Activated CD8-positive, alpha-beta T cell treated with anti-CD3 and anti-CD28 coated beads for 36 hours (primary cell): ENCODE measurements at regions of chr12 and their contacts with region 1.

Region 1: DNA sequence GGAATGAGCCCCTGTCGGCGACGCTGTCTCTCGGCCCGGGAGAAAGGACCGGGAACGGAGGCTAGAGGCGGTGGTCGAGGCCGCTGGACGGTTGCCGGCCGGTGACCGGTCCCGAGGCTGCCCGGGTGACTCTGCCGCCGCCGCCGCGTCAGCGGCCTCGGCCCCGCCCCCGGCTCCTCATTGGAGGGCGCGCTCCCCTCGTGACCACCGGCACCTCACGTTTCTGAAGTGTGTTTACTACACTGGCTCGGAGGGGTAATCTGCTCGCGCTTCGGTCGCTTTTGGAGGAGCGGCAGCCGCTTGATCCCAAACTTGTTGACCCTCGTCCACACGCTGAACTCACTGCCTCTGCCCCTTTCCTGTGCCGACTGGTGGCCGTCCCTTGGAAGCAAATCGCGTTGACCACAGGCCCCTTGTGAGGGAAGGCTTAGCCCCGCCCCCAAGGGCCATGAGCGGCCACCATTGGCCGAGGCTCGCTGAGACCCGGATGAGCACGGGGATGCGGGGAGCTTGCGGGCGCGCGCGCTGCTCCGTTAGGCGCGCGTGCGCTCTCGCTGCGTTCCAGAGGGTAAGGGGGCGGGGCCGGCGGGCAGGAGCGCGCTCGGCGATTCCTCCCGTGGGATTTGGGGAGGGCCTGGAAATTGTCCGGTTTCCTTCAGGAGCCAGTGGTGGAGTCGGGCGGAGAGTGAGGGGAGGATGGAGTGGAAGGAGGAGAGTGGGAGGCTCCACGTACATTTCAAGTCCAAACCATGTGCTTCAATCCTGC is at the start of gene CRY1:
- DNase-seq: peak; percentile 94
- ATAC-seq: peak; percentile 85
- H3K4me3 Mint-ChIP-seq: no peak within 1 kb of the TSS
- H3K27ac Mint-ChIP-seq: no peak within 1 kb of the TSS
- H3K4me1 Mint-ChIP-seq: peaks cover 11% of the 10 kb centered on the region
- H3K27me3 Mint-ChIP-seq: peaks cover 3% of the 10 kb centered on the region
- CTCF ChIP-seq: no peak
- total RNA-seq, gene CRY1: 26.6 to 27.8 TPM

Region 2: GRCh38 chr12:106955377-106956047 is 138.1 kb before region 1 on chr12 and contains the start of gene TMEM263:
- CTCF ChIA-PET with region 1: no interaction called
- POLR2A ChIA-PET with region 1: interaction called, 10 read pairs
- intact Hi-C with region 1: no loop called
- DNase-seq: peak; percentile 92
- ATAC-seq: peak; percentile 86
- H3K4me3 Mint-ChIP-seq: peak within 1 kb of the TSS; percentile 96
- H3K27ac Mint-ChIP-seq: peak within 1 kb of the TSS; percentile 95
- H3K4me1 Mint-ChIP-seq: peaks cover 19% of the 10 kb centered on the region
- H3K27me3 Mint-ChIP-seq: no peaks in the 10 kb centered on the region
- CTCF ChIP-seq: no peak
- total RNA-seq, gene TMEM263: 43.5 to 46.5 TPM

Region 3: GRCh38 chr12:106986625-106987430 is 106.8 kb before region 1 on chr12 and contains the start of gene MTERF2:
- CTCF ChIA-PET with region 1: no interaction called
- POLR2A ChIA-PET with region 1: no interaction called
- intact Hi-C with region 1: loop called (anchors 10 kb)
- DNase-seq: peak; percentile 86
- ATAC-seq: peak; percentile 98
- H3K4me3 Mint-ChIP-seq: peak within 1 kb of the TSS; percentile 90
- H3K27ac Mint-ChIP-seq: peak within 1 kb of the TSS; percentile 85
- H3K4me1 Mint-ChIP-seq: peaks cover 38% of the 10 kb centered on the region
- H3K27me3 Mint-ChIP-seq: no peaks in the 10 kb centered on the region
- CTCF ChIP-seq: no peak
- total RNA-seq, gene MTERF2: 4.8 to 5.9 TPM

Region 4: GRCh38 chr12:107079172-107080011 is 14.2 kb before region 1 on chr12:
- CTCF ChIA-PET with region 1: interaction called, 16 read pairs
- POLR2A ChIA-PET with region 1: interaction called, 3 read pairs
- intact Hi-C with region 1: no loop called
- DNase-seq: no peak
- ATAC-seq: peak; percentile 86
- H3K4me3 Mint-ChIP-seq: no peak overlapping the region
- H3K27ac Mint-ChIP-seq: no peak overlapping the region
- H3K4me1 Mint-ChIP-seq: peaks cover 15% of the 10 kb centered on the region
- H3K27me3 Mint-ChIP-seq: no peaks in the 10 kb centered on the region
- CTCF ChIP-seq: peak; percentile 62

Region 5: DNA sequence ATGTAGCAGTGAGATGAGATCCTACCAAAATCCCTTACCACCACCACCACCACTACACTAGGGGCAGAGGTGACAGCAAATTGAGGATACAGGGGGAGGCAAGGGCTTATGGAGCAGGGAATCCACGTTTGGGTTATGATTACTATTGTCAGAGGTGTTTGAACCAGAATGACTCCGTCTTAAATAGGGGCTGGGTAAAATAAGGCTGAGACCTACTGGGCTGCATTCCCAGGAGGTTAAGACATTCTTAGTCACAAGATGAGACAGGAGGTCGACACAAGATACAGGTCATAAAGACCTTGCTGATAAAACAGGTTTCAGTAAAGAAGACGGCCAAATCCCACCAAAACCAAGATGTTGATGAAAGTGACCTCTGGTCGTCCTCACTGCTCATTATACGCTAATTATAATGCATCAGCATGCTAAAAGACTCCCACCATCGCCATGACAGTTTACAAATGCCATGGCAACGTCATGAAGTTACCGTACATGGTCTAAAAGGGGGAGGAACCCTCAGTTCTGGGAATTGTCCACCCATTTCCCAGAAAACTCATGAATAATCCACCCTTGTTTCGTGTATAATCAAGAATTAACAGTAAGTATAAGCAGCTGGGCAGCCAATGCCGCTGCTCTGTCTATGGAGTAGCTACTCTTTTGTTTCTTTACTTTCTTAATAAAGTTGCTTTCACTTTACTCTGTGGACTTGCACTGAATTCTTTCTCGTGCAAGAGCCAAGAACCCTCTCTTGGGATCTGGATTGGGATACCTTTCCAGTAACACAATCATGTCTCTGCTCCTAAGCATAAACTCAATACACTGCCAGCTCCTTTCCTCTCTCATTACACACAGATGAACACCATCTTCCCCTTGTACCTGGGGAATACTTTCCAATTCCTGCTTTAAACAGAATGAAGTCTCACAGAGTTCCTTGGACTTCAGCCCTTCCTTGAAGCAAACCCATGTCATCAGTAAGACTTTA is 16.4 kb after region 1 on chr12:
- CTCF ChIA-PET with region 1: interaction called, 70 read pairs
- POLR2A ChIA-PET with region 1: no interaction called
- intact Hi-C with region 1: no loop called
- DNase-seq: no peak
- ATAC-seq: no peak
- H3K4me3 Mint-ChIP-seq: no peak overlapping the region
- H3K27ac Mint-ChIP-seq: no peak overlapping the region
- H3K4me1 Mint-ChIP-seq: no peaks in the 10 kb centered on the region
- H3K27me3 Mint-ChIP-seq: peaks cover 5% of the 10 kb centered on the region
- CTCF ChIP-seq: no peak

Region 6: DNA sequence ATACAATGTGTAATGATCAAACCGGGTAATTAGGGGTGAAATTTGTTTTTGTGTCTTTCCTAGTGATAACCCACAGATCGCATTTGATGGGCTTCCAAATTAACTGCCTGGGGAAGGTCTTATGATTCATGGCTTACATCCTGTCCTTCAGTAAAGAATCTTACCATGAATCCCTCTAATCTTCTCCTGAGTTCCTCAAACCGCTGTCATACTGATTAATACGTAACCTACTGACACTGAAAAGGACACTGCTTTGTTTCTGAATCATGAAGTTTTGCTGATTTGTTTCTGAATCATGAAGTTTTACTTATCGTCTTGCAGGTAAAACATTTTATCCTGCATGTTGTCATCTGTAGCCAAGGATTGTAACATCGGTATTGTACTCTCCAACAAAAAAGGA is 51.8 kb after region 1 on chr12:
- CTCF ChIA-PET with region 1: no interaction called
- POLR2A ChIA-PET with region 1: no interaction called
- intact Hi-C with region 1: no loop called
- DNase-seq: no peak
- ATAC-seq: no peak
- H3K4me3 Mint-ChIP-seq: no peak overlapping the region
- H3K27ac Mint-ChIP-seq: no peak overlapping the region
- H3K4me1 Mint-ChIP-seq: no peaks in the 10 kb centered on the region
- H3K27me3 Mint-ChIP-seq: no peaks in the 10 kb centered on the region
- CTCF ChIP-seq: no peak

Region 7: GRCh38 chr12:107159384-107159900 is 65.8 kb after region 1 on chr12:
- CTCF ChIA-PET with region 1: no interaction called
- POLR2A ChIA-PET with region 1: no interaction called
- intact Hi-C with region 1: no loop called
- DNase-seq: no peak
- ATAC-seq: no peak
- H3K4me3 Mint-ChIP-seq: no peak overlapping the region
- H3K27ac Mint-ChIP-seq: no peak overlapping the region
- H3K4me1 Mint-ChIP-seq: no peaks in the 10 kb centered on the region
- H3K27me3 Mint-ChIP-seq: peaks cover 24% of the 10 kb centered on the region
- CTCF ChIP-seq: no peak